Heart right ventricle (tissue), 16 donors: ENCODE measurements at regions of chr15 and their contacts with region 1.

Region 1: GRCh38 chr15:69154684-69155083 is 5.8 kb upstream of the GLCE start:
- DNase-seq: peak in 1 of 2 donors; percentile 23
- ATAC-seq: peak in 6 of 8 donors; percentile 34 to 90 (median 72)
- H3K4me3 ChIP-seq: no peak overlapping the region
- H3K27ac ChIP-seq: peak overlapping the region in 2 of 10 donors; percentile 28 to 33
- H3K4me1 ChIP-seq: peaks cover 0 to 19% (median 0%) of the 10 kb centered on the region in 9 donors
- H3K27me3 ChIP-seq: peaks cover 0 to 16% (median 0%) of the 10 kb centered on the region in 7 donors
- CTCF ChIP-seq: no peak

Region 2: DNA sequence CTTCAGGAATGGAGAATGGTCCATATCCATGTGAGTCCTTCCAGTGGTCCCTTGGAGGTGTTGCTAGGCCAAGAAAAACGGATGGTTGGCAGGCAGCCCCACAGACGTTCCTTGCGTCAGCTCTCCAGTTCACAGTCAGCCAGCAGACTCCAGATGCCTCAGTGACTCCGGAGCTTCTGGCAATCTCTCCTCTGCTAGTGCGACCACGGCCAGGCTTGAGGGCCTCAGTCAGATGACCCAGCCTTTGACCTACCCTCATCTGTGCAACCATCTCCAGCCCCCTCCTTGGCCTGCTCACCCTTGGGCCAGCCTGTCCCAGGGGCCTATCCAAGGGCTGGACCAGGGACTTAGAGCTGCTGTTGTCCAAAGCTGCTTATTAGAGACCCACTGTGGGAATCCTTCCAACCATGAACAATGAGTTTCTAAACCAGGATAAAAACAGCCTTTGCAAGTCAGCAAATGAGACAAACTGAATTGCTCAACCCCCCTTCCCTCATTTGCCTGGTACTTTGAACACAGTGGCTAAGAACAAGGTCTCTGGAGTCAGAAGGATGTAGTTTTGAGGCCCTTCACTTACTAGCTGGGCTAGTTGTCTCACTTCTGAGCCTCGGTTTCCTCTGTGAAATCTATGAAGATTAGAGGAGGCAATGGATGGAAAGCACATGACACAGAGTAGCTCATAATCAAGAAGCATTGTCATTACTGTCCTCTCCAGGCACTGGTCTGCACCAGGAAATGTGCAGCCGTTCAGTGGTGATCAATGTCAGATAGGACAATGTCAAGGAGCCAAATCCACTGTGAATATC is 378.8 kb before region 1 on chr15:
- intact Hi-C with region 1: no loop called
- DNase-seq: peak; percentile 85 to 90
- ATAC-seq: peak; percentile 86 to 95 (median 90)
- H3K4me3 ChIP-seq: no peak overlapping the region
- H3K27ac ChIP-seq: peak overlapping the region; percentile 20 to 88 (median 66)
- H3K4me1 ChIP-seq: peaks cover 6 to 33% (median 25%) of the 10 kb centered on the region in 9 donors
- H3K27me3 ChIP-seq: no peaks in the 10 kb centered on the region
- CTCF ChIP-seq: no peak

Region 3: DNA sequence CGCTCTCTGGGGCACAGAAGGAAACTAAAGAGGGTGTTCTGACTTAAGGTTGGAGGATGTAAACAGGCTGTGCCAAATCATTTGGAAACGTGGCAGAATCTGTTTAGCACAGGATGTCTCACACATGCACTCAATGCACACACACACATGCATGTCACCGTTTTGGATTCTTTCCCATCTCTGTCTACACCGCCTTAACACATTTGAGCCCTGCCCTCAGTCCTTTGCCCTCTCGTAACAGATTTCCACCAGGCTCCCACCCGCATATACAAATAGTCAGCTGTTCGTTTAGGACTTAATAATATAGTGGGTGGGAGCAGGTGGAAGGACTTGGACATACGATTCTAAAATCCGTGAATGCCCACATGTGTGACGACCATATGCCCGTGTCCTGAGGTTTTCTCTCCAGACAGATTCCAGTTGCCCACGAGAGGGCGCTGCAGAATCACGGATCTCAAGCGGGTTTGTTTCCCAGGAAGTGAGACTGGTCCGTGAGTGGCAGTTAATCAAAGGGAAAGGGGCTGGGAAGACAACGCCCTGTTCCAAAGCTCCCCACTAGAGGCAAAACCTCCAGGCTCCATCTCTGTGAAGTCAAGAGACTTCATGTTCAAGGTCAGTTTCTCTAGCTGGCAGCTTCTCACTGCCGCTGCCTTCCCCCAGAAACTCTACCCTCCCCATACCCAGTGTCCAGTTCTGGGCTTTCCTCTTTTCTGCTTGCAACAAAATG is 95.7 kb before region 1 on chr15:
- intact Hi-C with region 1: loop called in 1 of 10 experiments (anchors 5 kb)
- DNase-seq: peak; percentile 89 to 90
- ATAC-seq: peak; percentile 77 to 96 (median 86)
- H3K4me3 ChIP-seq: peak overlapping the region in 3 of 10 donors; percentile 23 to 30 (median 29)
- H3K27ac ChIP-seq: peak overlapping the region in 8 of 10 donors; percentile 20 to 75 (median 68)
- H3K4me1 ChIP-seq: peaks cover 0 to 27% (median 23%) of the 10 kb centered on the region in 9 donors
- H3K27me3 ChIP-seq: peaks cover 0 to 10% (median 0%) of the 10 kb centered on the region in 7 donors
- CTCF ChIP-seq: peak; percentile 76 to 95 (median 90)

Region 4: GRCh38 chr15:69081310-69082004 is 73.2 kb before region 1 on chr15:
- intact Hi-C with region 1: loop called in 1 of 10 experiments (anchors 10 kb)
- DNase-seq: peak; percentile 76 to 81
- ATAC-seq: peak; percentile 80 to 91 (median 84)
- H3K4me3 ChIP-seq: peak overlapping the region in 2 of 10 donors; percentile 11 to 13
- H3K27ac ChIP-seq: peak overlapping the region; percentile 42 to 94 (median 77)
- H3K4me1 ChIP-seq: peaks cover 7 to 55% (median 42%) of the 10 kb centered on the region in 9 donors
- H3K27me3 ChIP-seq: no peaks in the 10 kb centered on the region
- CTCF ChIP-seq: peak in 1 of 9 donors; percentile 32

Region 5: GRCh38 chr15:69225355-69226025 is 70.8 kb after region 1 on chr15:
- intact Hi-C with region 1: loop called in 1 of 10 experiments (anchors 10 kb)
- DNase-seq: no peak
- ATAC-seq: peak in 1 of 8 donors; percentile 42
- H3K4me3 ChIP-seq: no peak overlapping the region
- H3K27ac ChIP-seq: no peak overlapping the region
- H3K4me1 ChIP-seq: peaks cover 0 to 19% (median 0%) of the 10 kb centered on the region in 9 donors
- H3K27me3 ChIP-seq: no peaks in the 10 kb centered on the region
- CTCF ChIP-seq: peak in 8 of 9 donors; percentile 15 to 57 (median 38)

Region 6: GRCh38 chr15:69394556-69395282 is 240.0 kb after region 1 on chr15:
- intact Hi-C with region 1: loop called in 1 of 10 experiments (anchors 10 kb)
- DNase-seq: peak; percentile 81 to 87
- ATAC-seq: peak; percentile 88 to 93 (median 91)
- H3K4me3 ChIP-seq: peak overlapping the region in 3 of 10 donors; percentile 10 to 24 (median 16)
- H3K27ac ChIP-seq: no peak overlapping the region
- H3K4me1 ChIP-seq: peaks cover 0 to 14% (median 9%) of the 10 kb centered on the region in 9 donors
- H3K27me3 ChIP-seq: peaks cover 0 to 13% (median 0%) of the 10 kb centered on the region in 7 donors
- CTCF ChIP-seq: peak; percentile 94 to 99 (median 97)